ENCODE measurements at regions of chr9 and their contacts with region 1.

Region 1: GRCh38 chr9:72526901-72527800 is 5.7 kb downstream of the TMC1 start:
- DNase-seq: peak; percentile 77
- H3K4me3 Mint-ChIP-seq: peak overlapping the region; percentile 49
- H3K27ac Mint-ChIP-seq: peak overlapping the region; percentile 70
- H3K4me1 Mint-ChIP-seq: peaks cover 27% of the 10 kb centered on the region
- H3K27me3 Mint-ChIP-seq: no peaks in the 10 kb centered on the region
- CTCF ChIP-seq: no peak

Region 2: DNA sequence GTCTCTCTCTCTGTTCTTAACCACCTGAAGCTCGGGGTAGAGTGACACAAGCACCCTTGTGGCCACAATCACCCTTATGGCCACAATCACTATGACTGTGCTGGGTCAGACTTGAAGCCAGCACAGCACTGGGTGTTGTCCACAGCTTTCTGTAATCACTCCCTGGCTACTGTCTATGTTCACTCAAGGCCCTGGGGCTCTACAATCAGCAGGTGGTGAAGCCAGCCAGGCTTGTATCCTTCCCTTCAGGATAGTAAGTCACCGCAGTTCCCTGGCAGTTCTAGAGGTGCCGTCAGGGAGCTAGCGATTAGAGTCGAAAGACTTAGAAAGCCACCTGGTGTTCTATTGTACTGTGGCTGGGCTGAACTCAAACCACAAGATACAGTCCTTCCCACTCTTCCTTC is 333.7 kb before region 1 on chr9:
- CTCF ChIA-PET with region 1: no interaction called
- intact Hi-C with region 1: no loop called
- DNase-seq: no peak
- H3K4me3 Mint-ChIP-seq: no peak overlapping the region
- H3K27ac Mint-ChIP-seq: no peak overlapping the region
- H3K4me1 Mint-ChIP-seq: no peaks in the 10 kb centered on the region
- H3K27me3 Mint-ChIP-seq: no peaks in the 10 kb centered on the region
- CTCF ChIP-seq: no peak

Region 3: GRCh38 chr9:72577212-72577753 is 50.1 kb after region 1 on chr9:
- CTCF ChIA-PET with region 1: no interaction called
- intact Hi-C with region 1: loop called (anchors 5 kb)
- DNase-seq: no peak
- H3K4me3 Mint-ChIP-seq: peak overlapping the region; percentile 9
- H3K27ac Mint-ChIP-seq: peak overlapping the region; percentile 84
- H3K4me1 Mint-ChIP-seq: peaks cover 63% of the 10 kb centered on the region
- H3K27me3 Mint-ChIP-seq: no peaks in the 10 kb centered on the region
- CTCF ChIP-seq: no peak

Measured in Calu3 (cell line).